ENCODE measurements at regions of chr4 and their contacts with region 1.

Region 1: DNA sequence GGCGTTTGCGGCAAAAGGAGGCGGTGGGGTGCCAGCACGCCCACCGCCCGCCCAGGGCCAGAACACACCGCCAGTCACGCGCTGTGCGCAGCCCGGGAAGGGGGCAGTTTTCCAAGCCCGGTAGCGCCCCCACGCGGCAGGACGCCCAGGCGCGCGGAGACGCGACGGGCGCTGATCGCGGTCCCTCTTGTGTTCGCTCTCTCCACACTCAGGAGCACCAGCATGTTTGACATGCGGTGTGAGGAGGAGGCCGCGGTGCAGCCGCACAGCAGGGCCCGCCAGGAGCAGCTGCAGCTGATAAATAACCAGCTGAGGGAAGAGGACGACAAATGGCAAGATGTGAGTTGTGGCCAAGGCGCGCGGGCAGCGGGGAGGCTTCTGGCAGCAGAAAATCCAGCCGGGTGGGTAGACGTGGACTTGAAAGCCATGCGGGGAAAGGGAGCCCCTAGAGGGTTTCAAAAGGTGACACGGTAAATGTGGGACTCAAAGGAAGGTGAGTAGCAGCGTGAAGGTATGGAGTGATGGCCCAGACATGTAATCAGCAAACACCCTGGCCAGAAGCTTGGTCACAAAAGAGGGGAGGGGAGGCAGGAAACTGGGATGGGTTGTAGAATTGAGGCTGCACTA is 104.1 kb downstream of the PHOX2B start:
- DNase-seq: peak; percentile 52
- H3K4me3 ChIP-seq: no peak overlapping the region
- H3K27ac ChIP-seq: no peak overlapping the region
- H3K4me1 ChIP-seq: no peaks in the 10 kb centered on the region
- H3K27me3 ChIP-seq: peaks cover 15 to 28% of the 10 kb centered on the region in 2 experiments
- CTCF ChIP-seq: peak; percentile 88 to 94
- POLR2A ChIP-seq: no peak

Region 2: DNA sequence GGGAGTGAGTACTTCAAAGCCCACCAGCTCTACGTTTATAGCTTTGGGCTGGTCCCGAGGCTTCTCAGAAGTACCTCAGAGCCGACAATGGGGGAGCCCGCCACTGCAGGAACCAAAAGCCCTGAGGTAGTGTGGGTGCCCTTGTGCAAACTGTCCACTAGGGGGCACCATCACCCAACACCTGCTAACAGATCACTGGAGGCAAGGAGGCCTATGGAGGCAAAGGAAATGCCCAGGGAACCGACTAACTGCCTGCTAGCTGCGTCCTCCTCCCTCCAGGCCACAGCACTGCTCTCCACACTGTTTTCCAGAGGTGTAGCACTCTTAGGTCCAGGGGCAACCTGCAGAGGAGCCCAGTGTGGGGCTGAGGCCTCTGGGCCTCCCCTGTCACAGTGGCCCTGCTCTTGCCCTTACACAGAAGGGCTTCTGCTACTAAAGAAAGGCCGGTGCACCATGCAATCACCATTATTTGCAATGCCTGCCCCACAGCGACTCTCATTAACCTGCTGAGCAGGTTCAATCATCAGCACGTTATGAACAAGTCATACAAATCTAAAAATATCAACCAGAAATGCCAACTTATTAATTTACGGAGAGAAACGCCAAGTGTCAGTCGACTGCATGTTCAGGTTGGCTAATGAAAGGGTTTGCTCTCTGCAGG is 735.6 kb before region 1 on chr4:
- CTCF ChIA-PET with region 1: no interaction called
- POLR2A ChIA-PET with region 1: no interaction called
- dilution Hi-C with region 1: no loop called
- intact Hi-C with region 1: loop called (anchors 10 kb)
- DNase-seq: peak; percentile 79
- H3K4me3 ChIP-seq: no peak overlapping the region
- H3K27ac ChIP-seq: peak overlapping the region; percentile 98
- H3K4me1 ChIP-seq: peaks cover 29% of the 10 kb centered on the region
- H3K27me3 ChIP-seq: no peaks in the 10 kb centered on the region
- CTCF ChIP-seq: peak; percentile 92 to 96
- POLR2A ChIP-seq: no peak

Region 3: GRCh38 chr4:41281038-41281634 is 363.3 kb before region 1 on chr4:
- CTCF ChIA-PET with region 1: interaction called, 212 read pairs
- POLR2A ChIA-PET with region 1: no interaction called
- dilution Hi-C with region 1: no loop called
- intact Hi-C with region 1: loop called (anchors 1 kb)
- DNase-seq: peak; percentile 87
- H3K4me3 ChIP-seq: no peak overlapping the region
- H3K27ac ChIP-seq: no peak overlapping the region
- H3K4me1 ChIP-seq: no peaks in the 10 kb centered on the region
- H3K27me3 ChIP-seq: peaks cover 0 to 1% of the 10 kb centered on the region in 2 experiments
- CTCF ChIP-seq: peak; percentile 53 to 77
- POLR2A ChIP-seq: no peak

Region 4: DNA sequence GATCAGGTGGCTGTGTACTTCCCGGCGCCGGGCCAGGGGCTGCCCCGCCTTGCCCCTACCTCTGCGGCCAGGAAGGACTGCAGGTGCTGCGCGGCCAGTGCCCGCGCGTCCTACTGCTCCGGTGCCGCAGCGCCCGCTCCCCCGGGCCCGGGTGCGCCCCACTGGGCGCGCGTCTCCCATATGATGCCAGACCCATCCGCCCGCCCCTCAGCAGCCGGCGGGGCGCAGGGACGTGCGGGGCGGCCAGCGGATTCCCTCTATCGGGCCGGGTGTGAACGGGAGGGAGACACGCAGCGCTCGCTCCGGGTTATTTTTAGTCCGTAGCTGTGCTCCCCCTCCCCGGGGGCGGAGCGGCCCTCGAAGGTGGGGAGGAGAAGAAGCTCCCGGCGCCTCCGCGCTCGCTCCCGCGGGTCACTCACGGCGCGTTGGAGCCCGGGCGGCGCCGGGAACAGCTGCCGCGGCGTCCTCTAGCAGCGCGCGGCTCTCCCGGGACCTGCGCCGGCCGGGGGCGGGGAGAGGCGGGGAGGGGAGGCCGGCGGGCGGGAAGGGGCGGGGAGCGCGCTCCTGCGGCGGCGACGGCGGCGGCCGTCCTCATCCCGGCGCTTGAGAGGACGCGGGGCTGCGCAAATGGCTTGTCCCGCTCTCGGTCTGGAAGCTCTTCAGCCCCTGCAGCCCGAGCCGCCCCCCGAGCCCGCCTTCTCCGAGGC is 284.0 kb before region 1 on chr4:
- CTCF ChIA-PET with region 1: interaction called, 10 read pairs
- POLR2A ChIA-PET with region 1: no interaction called
- dilution Hi-C with region 1: no loop called
- intact Hi-C with region 1: loop called (anchors 10 kb)
- DNase-seq: peak; percentile 70
- H3K4me3 ChIP-seq: peak overlapping the region; percentile 28 to 76 (median 40)
- H3K27ac ChIP-seq: no peak overlapping the region
- H3K4me1 ChIP-seq: peaks cover 3% of the 10 kb centered on the region
- H3K27me3 ChIP-seq: peaks cover 7 to 52% of the 10 kb centered on the region in 2 experiments
- CTCF ChIP-seq: no peak
- POLR2A ChIP-seq: no peak

Region 5: GRCh38 chr4:41525129-41525528 is 119.3 kb before region 1 on chr4:
- CTCF ChIA-PET with region 1: interaction called, 6 read pairs
- POLR2A ChIA-PET with region 1: no interaction called
- dilution Hi-C with region 1: no loop called
- intact Hi-C with region 1: loop called (anchors 1 kb)
- DNase-seq: peak; percentile 96
- H3K4me3 ChIP-seq: no peak overlapping the region
- H3K27ac ChIP-seq: peak overlapping the region; percentile 98
- H3K4me1 ChIP-seq: peaks cover 21% of the 10 kb centered on the region
- H3K27me3 ChIP-seq: no peaks in the 10 kb centered on the region
- CTCF ChIP-seq: no peak
- POLR2A ChIP-seq: no peak

Region 6: GRCh38 chr4:41625531-41625930 is 18.9 kb before region 1 on chr4:
- CTCF ChIA-PET with region 1: interaction called, 13 read pairs
- POLR2A ChIA-PET with region 1: no interaction called
- dilution Hi-C with region 1: no loop called
- intact Hi-C with region 1: no loop called
- DNase-seq: no peak
- H3K4me3 ChIP-seq: no peak overlapping the region
- H3K27ac ChIP-seq: no peak overlapping the region
- H3K4me1 ChIP-seq: no peaks in the 10 kb centered on the region
- H3K27me3 ChIP-seq: peaks cover 11 to 28% of the 10 kb centered on the region in 2 experiments
- CTCF ChIP-seq: no peak
- POLR2A ChIP-seq: no peak